ENCODE measurements at regions of chr3 and their contacts with region 1.

Region 1: DNA sequence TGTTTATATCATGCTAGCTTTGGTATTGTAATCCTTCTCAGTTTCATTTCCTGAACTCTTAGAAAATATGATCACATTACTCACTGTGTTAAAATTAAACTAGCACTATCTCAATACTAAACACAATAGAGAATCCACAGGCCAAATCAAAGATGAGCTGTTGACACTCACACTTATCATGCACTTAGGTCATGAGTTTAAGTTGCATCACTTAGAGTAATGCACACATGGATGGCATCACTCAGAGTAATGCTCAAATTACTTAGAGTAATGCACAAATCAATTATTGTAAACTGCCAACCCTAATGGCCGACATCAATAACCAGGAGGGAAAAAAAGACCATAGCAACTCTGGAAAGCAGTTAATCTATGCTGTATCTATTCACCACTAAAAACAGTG is 40.0 kb upstream of the MCF2L2 start:
- DNase-seq: no peak
- H3K4me3 ChIP-seq: no peak overlapping the region
- H3K27ac ChIP-seq: no peak overlapping the region
- H3K4me1 ChIP-seq: no peaks in the 10 kb centered on the region
- H3K27me3 ChIP-seq: no peaks in the 10 kb centered on the region
- CTCF ChIP-seq: no peak
- EP300 ChIP-seq: no peak
- POLR2A ChIP-seq: no peak
- RAD21 ChIP-seq: no peak

Region 2: DNA sequence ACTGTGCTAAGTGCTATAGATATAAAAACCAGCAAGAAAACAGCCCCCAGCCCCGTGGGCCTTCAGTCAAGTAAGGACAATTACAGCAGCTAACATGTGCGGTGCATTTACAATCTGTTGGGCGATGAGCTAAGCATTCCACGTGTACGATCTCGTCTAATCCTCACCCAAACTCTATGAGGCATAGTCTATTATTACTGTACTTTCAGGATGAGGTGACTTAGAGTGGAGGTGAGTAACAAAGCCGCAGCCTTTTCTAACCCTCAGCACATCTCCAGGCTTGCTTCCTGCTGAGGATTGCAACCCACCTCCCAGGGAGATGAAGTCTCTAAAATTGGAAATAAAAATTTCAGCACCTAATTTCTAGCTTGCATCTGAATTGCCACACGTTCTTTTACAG is 13.2 kb after region 1 on chr3:
- CTCF ChIA-PET with region 1: interaction called, 24 read pairs
- POLR2A ChIA-PET with region 1: no interaction called
- DNase-seq: peak in 1 of 2 experiments; percentile 6
- H3K4me3 ChIP-seq: no peak overlapping the region
- H3K27ac ChIP-seq: no peak overlapping the region
- H3K4me1 ChIP-seq: peaks cover 0 to 7% (median 3%) of the 10 kb centered on the region in 4 experiments; a peak in 2 of 7 replicates
- H3K27me3 ChIP-seq: no peaks in the 10 kb centered on the region
- CTCF ChIP-seq: no peak
- EP300 ChIP-seq: no peak
- POLR2A ChIP-seq: no peak
- RAD21 ChIP-seq: no peak

Region 3: GRCh38 chr3:183490670-183491069 is 22.2 kb after region 1 on chr3:
- CTCF ChIA-PET with region 1: interaction called, 16 read pairs
- POLR2A ChIA-PET with region 1: no interaction called
- DNase-seq: peak; percentile 39 to 44
- H3K4me3 ChIP-seq: no peak overlapping the region
- H3K27ac ChIP-seq: no peak overlapping the region
- H3K4me1 ChIP-seq: peaks cover 0 to 12% (median 8%) of the 10 kb centered on the region in 4 experiments; a peak in 5 of 7 replicates
- H3K27me3 ChIP-seq: no peaks in the 10 kb centered on the region; a peak in 1 of 7 replicates
- CTCF ChIP-seq: no peak
- EP300 ChIP-seq: no peak
- POLR2A ChIP-seq: no peak
- RAD21 ChIP-seq: no peak

Region 4: DNA sequence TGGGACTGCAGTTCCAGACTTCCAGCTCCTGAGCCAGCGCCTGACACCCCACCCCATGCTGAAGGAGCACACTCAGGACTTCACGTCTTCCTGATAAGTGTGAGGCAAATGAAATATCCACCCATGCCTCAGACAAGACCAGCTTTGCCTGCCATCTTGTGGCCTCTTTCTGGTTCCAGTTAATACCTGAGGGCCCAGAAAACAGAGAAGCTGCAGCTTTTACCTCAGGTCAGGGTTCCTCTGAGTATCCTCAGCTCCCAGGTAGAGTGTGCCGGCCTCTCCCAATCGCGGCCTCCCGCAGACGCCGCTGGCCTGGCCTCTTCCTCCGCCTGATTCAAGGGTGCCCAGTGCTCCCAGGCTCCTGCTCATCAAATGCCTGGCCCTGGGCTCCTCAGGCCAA is 92.2 kb after region 1 on chr3:
- CTCF ChIA-PET with region 1: interaction called, 13 read pairs
- POLR2A ChIA-PET with region 1: no interaction called
- DNase-seq: no peak
- H3K4me3 ChIP-seq: no peak overlapping the region
- H3K27ac ChIP-seq: no peak overlapping the region
- H3K4me1 ChIP-seq: no peaks in the 10 kb centered on the region
- H3K27me3 ChIP-seq: no peaks in the 10 kb centered on the region
- CTCF ChIP-seq: peak in 2 of 3 experiments; percentile 53 to 59; a peak in 3 of 4 replicates
- EP300 ChIP-seq: no peak
- POLR2A ChIP-seq: no peak
- RAD21 ChIP-seq: peak; percentile 70 to 77

Measured in H1 (cell line).